AG04450 (cell line): ENCODE measurements at regions of chr14 and their contacts with region 1.

Region 1: DNA sequence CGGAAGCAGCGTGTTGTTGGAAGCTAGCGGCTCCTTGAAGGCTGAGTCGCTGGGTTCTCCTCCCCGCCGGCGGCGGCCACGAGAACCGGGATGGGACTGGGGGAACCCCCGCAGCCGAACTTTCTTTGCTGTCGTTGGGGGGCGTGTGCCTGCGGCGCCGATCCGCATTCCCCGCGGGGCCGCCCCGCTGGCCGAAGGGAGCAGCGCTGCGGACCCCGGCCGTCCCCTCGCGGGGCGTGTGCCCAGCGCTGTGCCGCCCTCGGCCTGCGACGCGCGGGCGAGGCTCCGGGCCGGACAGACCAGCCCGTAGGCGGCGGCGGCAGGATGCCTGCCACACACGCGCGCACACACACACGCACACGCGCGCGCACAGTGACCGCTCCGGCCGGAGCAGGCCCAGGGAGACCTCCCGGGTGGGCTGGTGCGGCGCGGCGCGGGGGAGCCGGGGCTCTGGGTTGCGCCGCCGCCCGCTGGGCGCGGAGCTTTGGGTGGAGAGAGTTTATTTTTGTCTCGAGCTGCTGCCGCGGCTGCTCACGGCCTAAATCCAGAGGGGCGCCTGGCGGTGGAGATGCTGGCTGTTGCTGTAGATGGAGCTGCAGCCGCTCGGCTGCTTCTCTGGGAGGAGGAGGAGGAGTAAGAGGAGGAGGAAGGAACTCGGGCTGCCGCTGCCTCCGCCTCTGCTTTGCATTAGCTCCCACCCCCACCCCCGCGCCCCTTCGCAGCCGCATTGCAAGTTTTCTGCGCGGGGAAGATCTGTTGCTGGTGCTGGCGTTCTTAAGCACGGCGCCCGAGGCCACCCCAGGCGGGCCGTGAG is at the start of gene SAMD4A:
- DNase-seq: peak; percentile 71
- H3K4me3 ChIP-seq: peak within 1 kb of the TSS; percentile 80
- H3K27ac ChIP-seq: peak within 1 kb of the TSS; percentile 86
- H3K27me3 ChIP-seq: no peaks in the 10 kb centered on the region
- CTCF ChIP-seq: peak; percentile 46
- polyA plus RNA-seq, gene SAMD4A: 12.7 and 21.0 TPM in 2 replicates

Region 2: DNA sequence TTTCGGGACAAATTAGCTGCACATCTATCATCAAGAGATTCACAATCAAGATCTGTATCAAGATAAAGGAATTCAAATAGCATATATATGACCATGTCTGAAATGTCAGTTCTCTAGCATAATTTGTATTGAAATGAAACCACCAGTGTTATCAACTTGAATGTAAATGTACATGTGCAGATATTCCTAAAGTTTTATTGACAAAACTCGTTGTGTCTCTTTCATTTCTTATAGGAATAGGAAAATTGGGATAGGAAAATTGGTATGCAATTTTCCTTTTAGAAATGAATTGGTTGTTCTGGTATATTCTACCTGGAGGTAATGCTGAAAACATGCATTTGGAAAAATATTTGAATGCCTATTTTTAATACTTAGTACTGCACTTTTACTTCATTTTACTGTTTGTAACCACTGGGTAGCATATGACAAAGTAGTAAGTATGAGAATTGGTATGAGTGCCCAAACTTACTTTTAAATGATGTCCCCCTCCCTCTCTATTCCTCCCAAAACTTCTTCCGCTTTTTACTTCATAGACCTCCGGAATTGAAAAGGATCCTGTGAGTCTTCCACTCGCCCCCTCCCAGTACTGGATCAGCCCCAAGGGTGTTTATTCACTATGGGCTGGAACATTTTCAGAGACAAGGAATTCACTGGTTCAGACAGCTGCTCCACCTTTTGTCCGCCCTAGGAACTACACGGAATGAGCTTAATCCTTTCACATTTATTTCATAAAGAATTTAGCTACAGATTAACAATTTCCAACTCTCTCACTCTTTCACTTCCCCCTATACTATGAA is 146.4 kb before region 1 on chr14:
- CTCF ChIA-PET with region 1: no interaction called
- POLR2A ChIA-PET with region 1: no interaction called
- DNase-seq: no peak
- H3K4me3 ChIP-seq: no peak overlapping the region
- H3K27ac ChIP-seq: no peak overlapping the region
- H3K27me3 ChIP-seq: no peaks in the 10 kb centered on the region
- CTCF ChIP-seq: peak; percentile 78

Region 3: DNA sequence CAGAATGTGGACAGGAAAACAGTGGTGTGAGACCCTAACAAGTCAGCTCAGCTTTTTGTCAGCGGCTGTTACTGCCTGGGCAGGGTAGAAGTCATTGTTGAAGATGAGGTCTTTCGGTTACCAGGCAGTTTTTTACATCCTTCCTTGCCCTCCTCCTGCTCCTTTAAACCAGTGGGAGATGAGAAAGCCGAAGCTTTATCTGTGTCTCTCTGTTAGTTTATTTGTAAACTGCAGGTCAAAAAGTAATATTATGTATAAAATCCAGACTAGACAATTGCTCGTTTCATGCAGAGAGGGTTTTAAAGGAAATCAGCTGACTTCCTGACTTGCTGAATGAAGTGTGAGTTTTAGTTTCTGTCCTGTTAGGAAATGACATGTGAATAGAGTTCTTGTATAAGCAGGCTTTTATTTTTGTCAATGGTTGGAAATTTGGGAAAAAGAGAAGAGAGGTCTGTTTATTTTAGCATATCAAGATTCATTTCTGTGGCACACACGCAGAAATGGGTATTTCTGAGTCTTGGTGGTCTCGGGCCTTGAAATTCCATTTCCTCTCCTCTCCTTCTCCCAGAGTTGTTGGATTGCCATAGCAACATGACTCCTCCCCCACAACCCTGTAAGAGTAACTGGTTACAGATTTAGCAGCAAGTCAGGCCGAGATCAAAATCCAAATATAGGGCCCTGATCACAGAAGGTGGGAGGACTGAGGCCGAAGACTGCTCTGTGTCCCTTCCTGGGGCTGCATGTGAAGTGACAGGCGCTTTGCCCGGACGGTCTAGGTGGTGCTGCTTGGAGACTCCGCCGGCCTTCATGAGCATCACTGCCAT is 61.1 kb after region 1 on chr14:
- CTCF ChIA-PET with region 1: interaction called, 7 read pairs
- POLR2A ChIA-PET with region 1: interaction called, 25 read pairs
- DNase-seq: no peak
- H3K4me3 ChIP-seq: peak overlapping the region; percentile 22
- H3K27ac ChIP-seq: peak overlapping the region; percentile 74
- H3K27me3 ChIP-seq: no peaks in the 10 kb centered on the region
- CTCF ChIP-seq: no peak

Region 4: DNA sequence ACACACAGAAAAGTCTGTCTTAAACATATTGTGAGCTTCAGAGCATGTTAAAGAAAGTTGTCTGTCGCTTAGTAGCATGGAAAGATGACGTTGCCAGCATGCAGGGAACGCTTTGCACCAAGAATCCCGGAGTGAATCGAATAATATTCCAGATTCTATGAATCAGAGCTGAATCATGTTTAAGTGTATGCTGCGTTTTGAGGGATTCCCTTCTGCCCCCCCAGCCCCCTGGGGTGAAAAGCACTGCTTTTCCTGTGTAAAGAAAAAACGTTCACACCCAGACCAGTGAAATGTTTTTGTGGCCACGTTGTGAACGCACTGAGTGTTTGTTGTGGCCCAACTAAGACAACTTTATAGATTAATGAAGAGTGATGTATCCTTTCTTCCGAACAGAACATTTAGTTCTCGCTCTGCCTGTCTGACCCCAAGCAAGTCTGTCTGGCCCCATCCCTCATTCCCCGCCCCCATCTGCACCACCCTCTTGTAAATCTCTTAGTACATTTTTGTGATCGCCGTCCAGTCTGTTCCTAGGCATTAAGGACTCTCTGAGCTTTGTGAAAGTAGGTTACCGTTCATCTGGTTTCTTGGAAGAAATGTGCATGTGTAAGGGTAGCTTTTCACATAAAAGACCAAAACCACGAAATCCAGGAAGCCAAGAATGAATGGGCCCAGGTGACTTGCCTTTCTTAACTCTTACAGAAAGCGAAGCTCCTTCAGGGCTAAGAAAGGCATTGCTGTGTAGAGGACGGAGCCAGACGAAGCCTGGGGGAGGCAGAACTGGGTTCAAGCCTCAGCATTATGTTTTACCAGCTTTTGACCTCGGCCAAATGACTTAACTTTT is 103.3 kb after region 1 on chr14:
- CTCF ChIA-PET with region 1: interaction called, 10 read pairs
- POLR2A ChIA-PET with region 1: interaction called, 3 read pairs
- DNase-seq: peak; percentile 15
- H3K4me3 ChIP-seq: no peak overlapping the region
- H3K27ac ChIP-seq: no peak overlapping the region
- H3K27me3 ChIP-seq: no peaks in the 10 kb centered on the region
- CTCF ChIP-seq: no peak

Region 5: GRCh38 chr14:54698966-54699530 is 132.4 kb after region 1 on chr14:
- CTCF ChIA-PET with region 1: interaction called, 99 read pairs
- POLR2A ChIA-PET with region 1: no interaction called
- DNase-seq: no peak
- H3K4me3 ChIP-seq: no peak overlapping the region
- H3K27ac ChIP-seq: no peak overlapping the region
- H3K27me3 ChIP-seq: no peaks in the 10 kb centered on the region
- CTCF ChIP-seq: no peak

Region 6: GRCh38 chr14:54782751-54783679 is 216.4 kb after region 1 on chr14:
- CTCF ChIA-PET with region 1: interaction called, 186 read pairs
- POLR2A ChIA-PET with region 1: interaction called, 12 read pairs
- DNase-seq: no peak
- H3K4me3 ChIP-seq: no peak overlapping the region
- H3K27ac ChIP-seq: no peak overlapping the region
- H3K27me3 ChIP-seq: no peaks in the 10 kb centered on the region
- CTCF ChIP-seq: 0 out of 2 replicates have a peak, but pooled peaks have one; percentile 21

Region 7: GRCh38 chr14:54839701-54840119 is 273.1 kb after region 1 on chr14:
- CTCF ChIA-PET with region 1: no interaction called
- POLR2A ChIA-PET with region 1: no interaction called
- DNase-seq: no peak
- H3K4me3 ChIP-seq: no peak overlapping the region
- H3K27ac ChIP-seq: no peak overlapping the region
- H3K27me3 ChIP-seq: peaks cover 21% of the 10 kb centered on the region
- CTCF ChIP-seq: no peak